Gastrocnemius medialis (tissue), 4 donors: ENCODE measurements at regions of chr14 and their contacts with region 1.

Region 1: GRCh38 chr14:74860906-74861733 is 14.8 kb downstream of the PROX2 start:
- DNase-seq: peak; percentile 59 to 82
- ATAC-seq: peak in 1 of 2 donors; percentile 60
- H3K4me3 ChIP-seq: no peak overlapping the region
- H3K27ac ChIP-seq: no peak overlapping the region
- H3K4me1 ChIP-seq: peaks cover 13 to 19% of the 10 kb centered on the region in 2 donors
- H3K27me3 ChIP-seq: no peaks in the 10 kb centered on the region
- CTCF ChIP-seq: peak; percentile 76 to 90 (median 85)
- POLR2A ChIP-seq: no peak

Region 2: GRCh38 chr14:74478996-74479635 is 382.0 kb before region 1 on chr14:
- in situ Hi-C with region 1: no loop called
- intact Hi-C with region 1: no loop called
- DNase-seq: no peak
- ATAC-seq: peak in 1 of 2 donors; percentile 48
- H3K4me3 ChIP-seq: no peak overlapping the region
- H3K27ac ChIP-seq: no peak overlapping the region
- H3K4me1 ChIP-seq: peaks cover 22 to 24% of the 10 kb centered on the region in 2 donors
- H3K27me3 ChIP-seq: no peaks in the 10 kb centered on the region
- CTCF ChIP-seq: peak; percentile 30 to 69 (median 61)
- POLR2A ChIP-seq: no peak

Region 3: DNA sequence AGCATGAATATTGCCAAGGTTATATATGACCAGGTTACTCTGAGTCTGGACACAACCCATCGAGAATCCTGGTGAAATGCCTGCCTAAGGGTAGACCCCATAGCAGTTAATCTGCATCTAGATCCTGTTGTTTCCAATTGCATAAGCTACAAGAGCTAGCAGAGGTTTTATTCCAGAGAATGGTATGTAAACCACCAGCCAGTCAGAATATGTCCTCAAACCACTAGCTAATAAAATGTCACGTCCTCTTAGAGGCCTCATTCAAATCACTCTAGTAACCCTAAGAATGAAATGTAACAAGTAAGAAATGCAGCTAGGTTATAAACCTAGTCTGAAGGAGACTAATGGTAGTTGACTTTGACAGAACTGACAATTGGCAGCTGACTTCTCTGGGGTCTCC is 107.0 kb before region 1 on chr14:
- in situ Hi-C with region 1: no loop called
- intact Hi-C with region 1: no loop called
- DNase-seq: no peak
- ATAC-seq: no peak
- H3K4me3 ChIP-seq: no peak overlapping the region
- H3K27ac ChIP-seq: no peak overlapping the region
- H3K4me1 ChIP-seq: no peaks in the 10 kb centered on the region
- H3K27me3 ChIP-seq: no peaks in the 10 kb centered on the region
- CTCF ChIP-seq: no peak
- POLR2A ChIP-seq: no peak

Region 4: DNA sequence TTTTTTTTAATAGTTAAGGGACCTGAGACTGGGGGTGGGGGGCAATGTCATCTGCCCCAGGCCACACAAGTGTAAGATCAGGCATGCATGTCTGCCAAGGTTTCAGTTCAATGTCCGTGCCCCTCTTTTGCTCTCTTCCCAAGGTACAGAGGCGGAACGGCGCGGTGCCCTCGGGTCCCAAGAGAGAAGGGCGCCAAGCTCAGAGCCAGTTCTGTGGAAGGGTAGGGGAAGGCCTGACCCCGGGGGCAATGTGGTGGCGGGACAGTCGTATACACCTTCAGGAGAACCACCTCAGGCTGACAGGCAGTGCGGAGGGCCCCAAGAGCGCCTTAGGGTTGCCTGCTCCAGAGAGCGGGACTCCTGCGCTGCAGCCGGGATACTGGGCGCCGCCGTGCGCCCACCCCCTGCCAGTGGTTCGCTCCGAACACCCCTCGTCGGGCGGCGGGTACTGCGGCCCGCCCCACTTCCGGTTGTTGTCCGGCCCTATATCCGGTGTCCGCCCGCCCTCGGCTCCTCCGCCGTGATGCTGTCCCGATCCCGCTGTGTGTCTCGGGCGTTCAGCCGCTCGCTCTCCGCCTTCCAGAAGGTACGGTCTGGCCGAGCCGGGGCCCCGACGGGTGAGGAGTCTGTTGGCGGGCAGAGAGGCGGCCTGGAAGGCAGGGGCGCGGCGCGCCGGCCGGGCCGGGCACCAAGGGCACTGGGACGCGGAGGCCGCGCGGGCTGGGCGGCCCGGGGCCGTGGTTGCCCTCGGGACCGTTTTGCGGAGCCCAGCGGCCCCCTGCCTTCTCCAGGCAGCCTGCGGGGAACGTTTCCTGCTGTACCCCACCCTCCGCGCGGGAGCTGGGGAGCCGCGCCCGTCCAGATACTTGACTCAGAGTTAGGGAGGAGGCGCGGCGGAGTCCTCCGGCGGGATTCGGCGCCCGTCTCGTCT is 20.6 kb after region 1 on chr14 and contains the start of gene DLST:
- in situ Hi-C with region 1: no loop called
- intact Hi-C with region 1: loop called (anchors 2 kb)
- DNase-seq: peak; percentile 68 to 77
- ATAC-seq: peak; percentile 90 to 91
- H3K4me3 ChIP-seq: peak within 1 kb of the TSS; percentile 79 to 94 (median 82)
- H3K27ac ChIP-seq: peak within 1 kb of the TSS; percentile 94 to 99 (median 95)
- H3K4me1 ChIP-seq: peaks cover 41 to 45% of the 10 kb centered on the region in 2 donors
- H3K27me3 ChIP-seq: no peaks in the 10 kb centered on the region
- CTCF ChIP-seq: peak in 1 of 5 experiments; percentile 7
- POLR2A ChIP-seq: peak; percentile 83 to 87
- total RNA-seq, gene DLST: 71.3 to 157 (median 105) TPM

Region 5: DNA sequence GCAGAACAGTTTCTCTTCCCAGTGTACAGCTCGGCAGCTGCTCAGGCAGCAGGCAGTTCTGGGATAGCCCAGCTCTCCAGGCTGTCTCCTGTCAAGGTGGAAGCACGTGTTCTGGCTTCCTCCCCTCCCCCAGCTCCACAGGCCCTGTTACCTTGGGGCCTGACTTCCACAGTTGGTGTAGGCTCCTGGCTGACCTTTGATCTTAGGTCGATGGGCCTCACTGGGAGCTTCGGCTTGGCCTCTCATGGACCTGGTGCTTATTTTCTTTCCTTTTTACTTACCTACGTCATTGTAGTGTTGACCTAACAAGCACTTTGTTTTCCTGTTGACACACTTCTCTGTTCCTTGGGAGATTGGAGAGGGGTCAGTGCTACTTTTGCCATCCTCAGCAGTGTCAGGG is 37.6 kb after region 1 on chr14:
- in situ Hi-C with region 1: loop called in 2 of 4 experiments (anchors 5 kb)
- intact Hi-C with region 1: loop called (anchors 2 kb)
- DNase-seq: no peak
- ATAC-seq: no peak
- H3K4me3 ChIP-seq: no peak overlapping the region
- H3K27ac ChIP-seq: no peak overlapping the region
- H3K4me1 ChIP-seq: no peaks in the 10 kb centered on the region
- H3K27me3 ChIP-seq: no peaks in the 10 kb centered on the region
- CTCF ChIP-seq: no peak
- POLR2A ChIP-seq: no peak

Region 6: DNA sequence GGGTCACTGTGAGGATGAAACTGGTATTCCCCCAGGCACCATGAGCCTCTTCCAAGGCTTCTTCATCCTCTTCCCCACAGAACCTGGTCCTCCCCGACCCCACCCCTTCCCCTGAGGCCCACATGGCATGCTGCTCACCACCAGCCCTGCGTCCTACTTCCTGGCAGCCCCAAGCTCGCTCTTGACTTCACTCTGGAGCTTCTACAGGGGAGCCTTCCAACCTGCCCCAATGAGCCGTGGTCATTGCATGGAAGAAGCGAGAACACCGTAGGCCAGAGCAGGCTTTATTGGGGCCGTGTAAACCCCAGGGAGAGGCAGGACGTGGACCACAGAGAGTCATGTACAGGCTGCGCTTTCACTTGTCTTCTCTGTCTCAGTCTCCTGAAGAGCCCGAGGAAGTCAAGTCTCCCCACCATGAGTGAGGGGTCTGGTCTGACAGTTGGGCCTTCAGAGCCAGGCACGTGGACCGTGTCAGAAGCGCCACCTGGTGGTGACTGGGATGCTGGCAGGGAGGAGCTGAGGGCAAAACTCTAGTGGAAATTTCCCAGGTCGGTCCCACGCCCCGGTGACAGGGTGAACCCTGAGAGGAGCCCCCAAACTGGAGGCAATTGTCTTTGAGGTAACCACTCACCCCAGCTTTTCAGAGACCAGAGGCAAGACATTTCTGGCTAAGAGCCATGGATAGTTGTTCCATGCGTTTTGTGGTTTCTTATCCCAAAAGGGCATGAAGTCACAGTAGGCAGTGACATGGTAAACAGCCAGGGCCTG is 44.4 kb after region 1 on chr14:
- in situ Hi-C with region 1: loop called in 1 of 4 experiments (anchors 5 kb)
- intact Hi-C with region 1: loop called (anchors 1 kb)
- DNase-seq: peak; percentile 39 to 59
- ATAC-seq: peak; percentile 34 to 47
- H3K4me3 ChIP-seq: no peak overlapping the region
- H3K27ac ChIP-seq: peak overlapping the region in 1 of 4 donors; percentile 29
- H3K4me1 ChIP-seq: peaks cover 19 to 30% of the 10 kb centered on the region in 2 donors
- H3K27me3 ChIP-seq: no peaks in the 10 kb centered on the region
- CTCF ChIP-seq: peak; percentile 89 to 96 (median 91)
- POLR2A ChIP-seq: no peak